ENCODE measurements at regions of chr12 and their contacts with region 1.

Region 1: GRCh38 chr12:98653866-98654493 is 8.9 kb downstream of the APAF1 start:
- DNase-seq: peak in 4 of 14 experiments; percentile 11 to 74 (median 71)
- ATAC-seq: peak; percentile 55
- H3K4me3 ChIP-seq: no peak overlapping the region
- H3K4me3 Mint-ChIP-seq: no peak overlapping the region
- H3K27ac ChIP-seq: no peak overlapping the region
- H3K27ac Mint-ChIP-seq: no peak overlapping the region
- H3K4me1 ChIP-seq: no peaks in the 10 kb centered on the region
- H3K4me1 Mint-ChIP-seq: peaks cover 16% of the 10 kb centered on the region
- H3K27me3 ChIP-seq: no peaks in the 10 kb centered on the region
- H3K27me3 Mint-ChIP-seq: no peaks in the 10 kb centered on the region
- CTCF ChIP-seq: peak; percentile 76

Region 2: DNA sequence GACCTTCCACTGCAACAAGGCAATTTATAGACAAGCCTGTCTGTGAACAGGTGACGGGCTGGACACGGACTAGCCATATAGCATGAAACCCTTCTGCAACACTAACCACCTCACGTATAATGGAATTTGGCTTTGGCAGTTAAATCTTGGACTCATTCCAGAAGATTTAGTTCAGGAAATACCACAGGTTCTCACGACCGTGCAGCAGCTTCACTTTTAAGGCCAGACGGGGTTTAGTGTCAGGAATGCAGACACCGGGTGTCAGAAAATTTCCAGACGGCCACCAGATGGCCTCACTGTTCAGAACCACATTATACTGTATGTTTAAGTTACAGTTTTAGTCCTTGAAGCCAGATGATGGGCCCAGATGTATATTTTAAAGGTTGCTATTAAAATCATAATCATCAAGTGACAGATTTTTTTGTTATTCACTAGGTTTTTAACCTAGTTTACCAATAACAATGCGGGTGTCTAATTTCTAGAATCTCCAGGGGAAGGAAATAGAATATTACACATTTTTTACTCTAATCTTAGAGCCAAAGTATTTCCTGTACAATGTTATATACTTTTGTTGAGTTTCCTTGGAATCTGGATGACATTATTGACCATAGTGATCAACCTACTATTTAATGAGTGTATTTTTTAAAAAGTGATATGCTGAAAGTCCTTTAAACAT is 229.1 kb before region 1 on chr12:
- CTCF ChIA-PET with region 1: no interaction called
- POLR2A ChIA-PET with region 1: no interaction called
- intact Hi-C with region 1: loop called (anchors 1 to 2 kb)
- DNase-seq: peak; percentile 19 to 69 (median 40)
- ATAC-seq: peak; percentile 65
- H3K4me3 ChIP-seq: no peak overlapping the region
- H3K4me3 Mint-ChIP-seq: no peak overlapping the region
- H3K27ac ChIP-seq: no peak overlapping the region
- H3K27ac Mint-ChIP-seq: no peak overlapping the region
- H3K4me1 ChIP-seq: no peaks in the 10 kb centered on the region
- H3K4me1 Mint-ChIP-seq: no peaks in the 10 kb centered on the region
- H3K27me3 ChIP-seq: no peaks in the 10 kb centered on the region
- H3K27me3 Mint-ChIP-seq: no peaks in the 10 kb centered on the region
- CTCF ChIP-seq: peak; percentile 64

Region 3: DNA sequence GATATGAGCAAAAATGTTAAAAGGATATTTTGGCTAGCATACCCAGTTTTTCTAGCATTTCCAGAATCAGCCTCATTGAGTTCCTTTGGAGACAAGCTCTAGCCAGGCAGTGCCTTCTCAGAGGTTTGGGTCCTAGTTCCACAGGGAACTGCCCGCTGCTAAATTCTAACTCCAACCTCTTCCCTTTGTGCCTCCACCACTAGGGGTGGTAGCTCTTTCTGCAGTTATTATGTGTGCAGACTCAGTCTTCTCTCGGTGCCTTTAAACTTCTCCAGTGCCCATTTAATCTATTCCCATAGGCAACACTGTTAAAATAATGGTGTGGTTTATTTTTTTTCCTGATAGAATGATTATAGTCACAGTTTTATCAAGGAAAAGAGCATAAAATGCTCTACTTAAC is 82.0 kb before region 1 on chr12:
- CTCF ChIA-PET with region 1: interaction called, 25 read pairs
- POLR2A ChIA-PET with region 1: interaction called, 4 read pairs
- intact Hi-C with region 1: loop called (anchors 1 kb)
- DNase-seq: no peak
- ATAC-seq: no peak
- H3K4me3 ChIP-seq: no peak overlapping the region
- H3K4me3 Mint-ChIP-seq: no peak overlapping the region
- H3K27ac ChIP-seq: no peak overlapping the region
- H3K27ac Mint-ChIP-seq: no peak overlapping the region
- H3K4me1 ChIP-seq: peaks cover 2% of the 10 kb centered on the region
- H3K4me1 Mint-ChIP-seq: peaks cover 1% of the 10 kb centered on the region
- H3K27me3 ChIP-seq: no peaks in the 10 kb centered on the region
- H3K27me3 Mint-ChIP-seq: no peaks in the 10 kb centered on the region
- CTCF ChIP-seq: no peak

Region 4: DNA sequence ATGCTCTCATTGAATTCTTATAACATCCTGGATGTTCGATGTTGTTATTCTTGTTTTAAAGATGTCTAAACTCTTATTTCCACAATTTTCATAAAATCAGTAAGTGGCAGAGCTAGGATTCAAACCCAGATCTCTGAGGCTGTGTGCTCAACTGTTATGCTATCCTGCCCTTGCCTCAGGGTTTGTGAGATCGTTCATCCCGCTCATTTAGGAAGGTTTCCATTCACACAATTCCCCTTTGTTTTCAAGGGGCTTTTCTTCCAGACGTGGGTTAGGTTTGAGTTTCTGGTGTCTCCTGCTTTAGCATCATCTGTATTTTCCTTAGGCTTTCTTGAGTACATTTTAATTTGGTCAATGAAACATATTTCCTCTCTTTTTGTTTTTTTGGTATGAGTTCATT is 60.4 kb after region 1 on chr12:
- CTCF ChIA-PET with region 1: no interaction called
- POLR2A ChIA-PET with region 1: no interaction called
- intact Hi-C with region 1: no loop called
- DNase-seq: no peak
- ATAC-seq: no peak
- H3K4me3 ChIP-seq: no peak overlapping the region
- H3K4me3 Mint-ChIP-seq: no peak overlapping the region
- H3K27ac ChIP-seq: no peak overlapping the region
- H3K27ac Mint-ChIP-seq: no peak overlapping the region
- H3K4me1 ChIP-seq: no peaks in the 10 kb centered on the region
- H3K4me1 Mint-ChIP-seq: no peaks in the 10 kb centered on the region
- H3K27me3 ChIP-seq: no peaks in the 10 kb centered on the region
- H3K27me3 Mint-ChIP-seq: no peaks in the 10 kb centered on the region
- CTCF ChIP-seq: no peak